CD4-positive, alpha-beta memory T cell (primary cell): ENCODE measurements at regions of chr15 and their contacts with region 1.

Region 1: GRCh38 chr15:91302588-91303439 is 202.8 kb downstream of the SV2B start:
- DNase-seq: peak in 4 of 5 donors; percentile 54 to 63 (median 58)
- H3K4me3 ChIP-seq: no peak overlapping the region
- H3K4me3 Mint-ChIP-seq: peak overlapping the region in 6 of 8 donors; percentile 40 to 76 (median 58)
- H3K27ac ChIP-seq: no peak overlapping the region
- H3K27ac Mint-ChIP-seq: peak overlapping the region in 4 of 7 donors; percentile 1 to 65 (median 32)
- H3K4me1 ChIP-seq: peaks cover 47% of the 10 kb centered on the region
- H3K4me1 Mint-ChIP-seq: peaks cover 21 to 46% (median 34%) of the 10 kb centered on the region in 4 donors
- H3K27me3 ChIP-seq: no peaks in the 10 kb centered on the region
- H3K27me3 Mint-ChIP-seq: peaks cover 2 to 6% of the 10 kb centered on the region in 2 donors

Region 2: GRCh38 chr15:91291673-91292072 is 11.1 kb before region 1 on chr15:
- CTCF ChIA-PET with region 1: interaction called, 11 read pairs
- POLR2A ChIA-PET with region 1: no interaction called
- intact Hi-C with region 1: no loop called
- DNase-seq: no peak
- H3K4me3 ChIP-seq: no peak overlapping the region
- H3K4me3 Mint-ChIP-seq: no peak overlapping the region
- H3K27ac ChIP-seq: no peak overlapping the region
- H3K27ac Mint-ChIP-seq: no peak overlapping the region
- H3K4me1 ChIP-seq: no peaks in the 10 kb centered on the region
- H3K4me1 Mint-ChIP-seq: peaks cover 0 to 1% (median 0%) of the 10 kb centered on the region in 4 donors
- H3K27me3 ChIP-seq: no peaks in the 10 kb centered on the region
- H3K27me3 Mint-ChIP-seq: peaks cover 2 to 3% of the 10 kb centered on the region in 2 donors

Region 3: DNA sequence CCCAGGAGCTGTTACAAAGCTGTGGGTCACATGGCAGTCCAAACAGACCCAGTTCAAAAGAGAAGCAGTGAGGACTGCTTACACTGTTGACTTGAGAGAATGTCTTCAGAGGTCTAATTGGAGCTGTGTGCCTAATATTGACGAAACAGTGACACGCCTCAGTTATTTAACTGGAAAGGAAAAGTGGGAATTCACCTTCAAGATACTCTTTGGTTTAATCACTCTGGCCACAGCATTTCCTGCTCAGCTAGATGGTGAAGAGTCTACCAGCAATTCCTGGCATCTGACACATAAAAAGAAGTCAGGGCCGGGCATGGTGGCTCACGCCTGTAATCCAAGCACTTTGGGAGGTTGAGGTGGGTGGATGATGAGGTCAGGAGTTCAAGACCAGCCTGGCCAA is 123.6 kb after region 1 on chr15:
- CTCF ChIA-PET with region 1: interaction called, 4 read pairs
- POLR2A ChIA-PET with region 1: no interaction called
- intact Hi-C with region 1: loop called (anchors 10 kb)
- DNase-seq: peak in 2 of 5 donors; percentile 17 to 62
- H3K4me3 ChIP-seq: no peak overlapping the region
- H3K4me3 Mint-ChIP-seq: peak overlapping the region in 3 of 8 donors; percentile 8 to 36 (median 30)
- H3K27ac ChIP-seq: no peak overlapping the region
- H3K27ac Mint-ChIP-seq: peak overlapping the region in 3 of 7 donors; percentile 25 to 66 (median 54)
- H3K4me1 ChIP-seq: peaks cover 52% of the 10 kb centered on the region
- H3K4me1 Mint-ChIP-seq: peaks cover 24 to 84% (median 28%) of the 10 kb centered on the region in 4 donors
- H3K27me3 ChIP-seq: no peaks in the 10 kb centered on the region
- H3K27me3 Mint-ChIP-seq: no peaks in the 10 kb centered on the region

Region 4: DNA sequence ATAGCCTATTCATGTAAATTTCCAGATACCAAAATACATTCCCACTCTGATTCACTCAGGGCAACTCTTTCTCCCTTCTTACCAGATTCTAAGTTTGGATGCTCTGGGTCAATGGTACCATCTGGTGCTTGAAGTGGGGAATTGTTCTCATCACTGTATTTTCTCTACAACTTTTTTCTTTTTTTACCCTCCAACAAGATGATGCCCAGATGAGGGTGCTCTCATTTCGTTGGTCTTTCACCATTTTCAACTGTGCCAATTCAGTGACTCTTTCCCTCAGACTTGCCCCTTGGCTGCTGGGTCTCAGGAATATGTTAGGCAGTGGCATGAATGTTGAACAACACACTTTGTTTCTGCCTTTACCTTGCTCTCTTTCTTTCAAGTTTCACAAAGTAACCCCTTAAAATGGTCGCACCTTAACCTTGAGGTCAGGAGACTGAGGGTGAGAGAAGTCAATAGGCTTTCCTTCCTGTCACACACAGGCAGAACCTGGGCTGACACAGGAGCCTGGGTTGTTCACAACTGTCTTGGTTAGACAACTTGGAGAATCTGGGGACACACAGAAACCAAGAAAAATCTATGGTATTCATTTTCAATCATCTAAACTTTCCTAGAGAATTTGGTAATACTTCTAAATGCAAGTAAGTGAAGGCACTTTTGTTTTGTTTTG is 220.0 kb after region 1 on chr15:
- CTCF ChIA-PET with region 1: interaction called, 48 read pairs
- POLR2A ChIA-PET with region 1: no interaction called
- intact Hi-C with region 1: loop called (anchors 1 kb)
- DNase-seq: peak in 4 of 5 donors; percentile 37 to 52 (median 40)
- H3K4me3 ChIP-seq: no peak overlapping the region
- H3K4me3 Mint-ChIP-seq: peak overlapping the region in 3 of 8 donors; percentile 7 to 29 (median 12)
- H3K27ac ChIP-seq: no peak overlapping the region
- H3K27ac Mint-ChIP-seq: peak overlapping the region in 4 of 7 donors; percentile 23 to 68 (median 36)
- H3K4me1 ChIP-seq: peaks cover 25% of the 10 kb centered on the region
- H3K4me1 Mint-ChIP-seq: peaks cover 19 to 37% (median 24%) of the 10 kb centered on the region in 4 donors
- H3K27me3 ChIP-seq: no peaks in the 10 kb centered on the region
- H3K27me3 Mint-ChIP-seq: peaks cover 1 to 6% of the 10 kb centered on the region in 2 donors

Region 5: DNA sequence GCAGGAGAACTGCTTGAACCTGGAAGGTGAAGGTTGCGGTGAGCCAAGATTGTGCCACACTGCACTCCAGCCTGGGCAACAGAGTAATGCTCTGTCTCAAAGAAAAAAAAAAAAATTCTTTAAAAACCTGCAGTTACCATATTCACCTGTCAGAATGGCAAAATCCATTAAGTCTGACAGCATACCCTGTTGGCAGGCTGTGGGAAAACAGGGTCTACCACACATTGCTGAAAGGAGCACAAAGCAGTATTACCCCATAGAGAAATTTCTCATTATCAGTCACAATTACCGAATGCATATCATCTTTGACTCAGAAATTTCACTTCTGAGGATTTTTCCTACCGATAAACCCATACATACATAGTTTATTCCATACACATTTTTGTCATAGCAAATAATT is 286.5 kb after region 1 on chr15:
- CTCF ChIA-PET with region 1: interaction called, 3 read pairs
- POLR2A ChIA-PET with region 1: no interaction called
- intact Hi-C with region 1: loop called (anchors 1 kb)
- DNase-seq: no peak
- H3K4me3 ChIP-seq: no peak overlapping the region
- H3K4me3 Mint-ChIP-seq: no peak overlapping the region
- H3K27ac ChIP-seq: no peak overlapping the region
- H3K27ac Mint-ChIP-seq: no peak overlapping the region
- H3K4me1 ChIP-seq: no peaks in the 10 kb centered on the region
- H3K4me1 Mint-ChIP-seq: no peaks in the 10 kb centered on the region
- H3K27me3 ChIP-seq: peaks cover 5% of the 10 kb centered on the region
- H3K27me3 Mint-ChIP-seq: peaks cover 0 to 5% of the 10 kb centered on the region in 2 donors

Region 6: GRCh38 chr15:91942676-91943576 is 640.1 kb after region 1 on chr15:
- CTCF ChIA-PET with region 1: interaction called, 4 read pairs
- POLR2A ChIA-PET with region 1: interaction called, 3 read pairs
- intact Hi-C with region 1: loop called (anchors 1 kb)
- DNase-seq: peak; percentile 45 to 78 (median 60)
- H3K4me3 ChIP-seq: no peak overlapping the region
- H3K4me3 Mint-ChIP-seq: peak overlapping the region; percentile 42 to 89 (median 76)
- H3K27ac ChIP-seq: peak overlapping the region; percentile 37
- H3K27ac Mint-ChIP-seq: peak overlapping the region; percentile 41 to 89 (median 86)
- H3K4me1 ChIP-seq: peaks cover 48% of the 10 kb centered on the region
- H3K4me1 Mint-ChIP-seq: peaks cover 56 to 93% (median 72%) of the 10 kb centered on the region in 4 donors
- H3K27me3 ChIP-seq: no peaks in the 10 kb centered on the region
- H3K27me3 Mint-ChIP-seq: no peaks in the 10 kb centered on the region

Region 7: DNA sequence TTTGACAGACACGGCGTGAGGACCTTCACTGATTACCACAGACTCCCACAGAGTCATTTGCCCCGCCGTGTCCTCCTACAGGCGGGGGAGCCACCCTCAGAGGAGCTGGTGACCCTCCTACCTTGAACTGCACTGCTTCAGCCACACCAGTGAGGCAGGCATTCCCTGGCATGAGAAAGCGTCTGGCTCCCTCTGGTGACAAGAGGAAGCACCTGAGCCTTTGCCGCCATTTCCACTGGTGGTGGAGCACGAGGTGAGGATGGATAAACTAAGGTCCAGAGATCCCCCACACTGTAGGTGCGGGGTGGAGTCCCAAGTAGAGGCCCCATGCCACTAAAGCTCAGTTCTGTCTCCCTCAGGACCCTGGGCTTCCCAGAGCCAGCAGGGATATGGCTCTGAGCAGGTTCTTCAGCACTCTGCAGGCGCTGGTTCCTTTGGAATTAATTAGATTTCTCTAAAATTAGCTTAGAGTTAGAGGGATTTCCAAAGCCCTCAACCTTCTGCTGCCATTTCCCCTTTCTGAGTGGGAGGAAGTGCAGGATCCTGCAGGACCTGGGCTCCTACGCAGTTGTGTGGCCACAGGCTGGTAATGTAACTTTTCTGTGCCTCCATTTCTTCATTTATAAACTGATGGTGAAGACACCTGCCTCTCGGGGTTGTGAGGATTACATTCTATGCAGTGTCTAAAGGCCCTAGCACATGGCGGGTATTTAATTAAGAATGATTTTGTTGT is 774.7 kb after region 1 on chr15:
- CTCF ChIA-PET with region 1: interaction called, 16 read pairs
- POLR2A ChIA-PET with region 1: no interaction called
- intact Hi-C with region 1: loop called (anchors 1 kb)
- DNase-seq: peak; percentile 48 to 58 (median 55)
- H3K4me3 ChIP-seq: no peak overlapping the region
- H3K4me3 Mint-ChIP-seq: no peak overlapping the region
- H3K27ac ChIP-seq: no peak overlapping the region
- H3K27ac Mint-ChIP-seq: peak overlapping the region in 2 of 7 donors; percentile 42 to 69
- H3K4me1 ChIP-seq: peaks cover 51% of the 10 kb centered on the region
- H3K4me1 Mint-ChIP-seq: peaks cover 32 to 59% (median 40%) of the 10 kb centered on the region in 4 donors
- H3K27me3 ChIP-seq: no peaks in the 10 kb centered on the region
- H3K27me3 Mint-ChIP-seq: no peaks in the 10 kb centered on the region